ENCODE measurements at regions of chr1 and their contacts with region 1.

Region 1: GRCh38 chr1:86887479-86888162 is 26.3 kb downstream of the SELENOF start:
- DNase-seq: no peak
- ATAC-seq: no peak
- H3K4me3 ChIP-seq: no peak overlapping the region
- H3K27ac ChIP-seq: no peak overlapping the region
- H3K4me1 ChIP-seq: no peaks in the 10 kb centered on the region
- H3K27me3 ChIP-seq: no peaks in the 10 kb centered on the region
- CTCF ChIP-seq: no peak

Region 2: DNA sequence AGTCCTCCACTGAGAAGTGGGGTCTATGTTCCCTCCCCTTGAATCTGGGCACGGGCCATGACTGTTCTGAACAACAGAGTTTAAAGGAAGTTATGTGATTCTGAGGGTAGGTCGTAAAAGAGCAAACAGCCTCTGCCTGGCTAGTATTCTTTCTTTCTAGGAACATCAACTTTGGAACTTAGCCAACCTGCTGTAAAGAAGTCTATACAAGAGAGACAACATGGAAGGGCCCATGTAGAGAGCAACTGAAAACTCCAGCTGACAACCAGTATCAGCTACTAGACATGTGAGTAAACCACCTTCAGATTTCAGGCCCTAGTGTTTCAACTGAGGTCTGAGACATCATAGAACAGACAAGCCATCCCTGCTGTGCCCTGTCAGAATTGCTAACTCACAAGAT is 18.8 kb after region 1 on chr1:
- intact Hi-C with region 1: loop called in 1 of 2 experiments (anchors 2 kb)
- DNase-seq: no peak
- ATAC-seq: no peak
- H3K4me3 ChIP-seq: no peak overlapping the region
- H3K27ac ChIP-seq: no peak overlapping the region
- H3K4me1 ChIP-seq: peaks cover 27% of the 10 kb centered on the region
- H3K27me3 ChIP-seq: no peaks in the 10 kb centered on the region
- CTCF ChIP-seq: no peak

Region 3: GRCh38 chr1:87730274-87731216 is 842.9 kb after region 1 on chr1:
- intact Hi-C with region 1: loop called in 1 of 2 experiments (anchors 5 kb)
- DNase-seq: no peak
- ATAC-seq: no peak
- H3K4me3 ChIP-seq: no peak overlapping the region
- H3K27ac ChIP-seq: no peak overlapping the region
- H3K4me1 ChIP-seq: no peaks in the 10 kb centered on the region
- H3K27me3 ChIP-seq: no peaks in the 10 kb centered on the region
- CTCF ChIP-seq: no peak

Measured in psoas muscle (tissue), 8 donors.